ENCODE measurements at regions of chr15 and their contacts with region 1.

Region 1: DNA sequence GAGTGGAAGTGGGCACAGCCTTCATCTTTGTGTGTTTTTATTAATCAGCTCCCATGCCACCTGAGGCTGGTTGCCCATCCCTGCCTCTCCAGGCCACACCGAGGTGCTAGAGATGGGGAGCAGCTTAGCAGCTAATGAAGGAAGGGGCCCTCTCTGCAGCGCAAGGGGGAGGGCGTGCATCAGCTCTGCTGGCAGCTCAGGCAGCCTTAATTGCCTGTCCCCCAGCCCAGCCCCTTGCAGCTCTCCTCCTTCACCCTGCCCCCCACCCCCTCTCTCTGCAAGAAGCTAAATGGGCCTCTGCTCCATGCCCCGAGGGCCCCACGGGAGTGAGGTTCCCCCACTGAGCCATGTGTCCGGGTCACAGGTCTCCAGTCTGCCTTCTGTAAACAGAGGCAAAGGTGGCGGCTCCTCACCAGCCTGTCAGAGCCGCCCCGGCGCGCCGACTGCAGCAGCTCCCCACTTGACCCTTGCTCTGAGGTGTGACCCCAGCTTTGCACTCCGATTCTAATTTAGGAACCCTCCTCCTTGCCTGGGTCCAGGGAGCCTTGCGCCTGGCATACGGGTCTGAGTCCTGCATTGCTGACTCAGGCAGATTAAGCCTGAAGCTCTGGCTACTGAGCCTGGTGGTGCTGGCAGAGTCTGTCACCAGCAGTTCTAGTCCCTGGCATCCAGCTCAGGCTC is 27.9 kb upstream of the NTRK3 start:
- DNase-seq: no peak
- ATAC-seq: peak; percentile 42
- H3K4me3 Mint-ChIP-seq: no peak overlapping the region
- H3K27ac Mint-ChIP-seq: no peak overlapping the region
- H3K4me1 Mint-ChIP-seq: peaks cover 21% of the 10 kb centered on the region
- H3K27me3 Mint-ChIP-seq: peaks cover 15% of the 10 kb centered on the region; the same call in 1 of the 2 replicates
- CTCF ChIP-seq: no peak

Region 2: DNA sequence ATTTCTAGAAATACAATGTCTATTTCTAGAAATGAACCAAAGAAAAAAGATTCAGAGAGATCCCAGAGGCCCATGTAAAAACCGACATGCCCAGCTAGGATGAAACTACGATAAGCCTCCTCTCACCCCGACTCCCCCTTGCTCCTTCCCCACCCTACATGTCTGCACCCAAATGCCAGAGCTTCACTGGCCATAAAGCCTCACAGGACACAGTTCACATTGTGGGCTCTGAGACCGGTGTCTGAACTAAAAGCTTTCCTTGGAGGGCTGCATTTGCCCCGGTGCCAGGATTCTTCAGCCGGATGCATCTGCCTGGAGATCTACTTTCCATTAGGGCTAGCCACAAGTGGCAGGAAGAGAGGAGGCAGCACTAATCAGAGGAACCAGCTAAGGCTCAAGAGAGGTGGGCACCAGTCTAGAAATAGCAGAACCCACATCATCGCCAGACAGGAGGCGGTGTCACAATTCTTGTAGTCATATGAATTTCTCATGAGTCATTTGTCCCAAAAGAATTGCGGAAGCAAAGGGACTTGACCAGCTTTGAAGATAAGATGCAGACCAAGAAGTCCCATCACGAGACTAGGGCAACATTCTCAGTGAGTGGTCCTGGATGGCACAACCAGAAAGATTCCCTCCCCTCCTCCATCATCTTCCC is 381.6 kb before region 1 on chr15:
- CTCF ChIA-PET with region 1: no interaction called
- POLR2A ChIA-PET with region 1: no interaction called
- DNase-seq: no peak
- ATAC-seq: no peak
- H3K4me3 Mint-ChIP-seq: no peak overlapping the region
- H3K27ac Mint-ChIP-seq: no peak overlapping the region
- H3K4me1 Mint-ChIP-seq: no peaks in the 10 kb centered on the region
- H3K27me3 Mint-ChIP-seq: no peaks in the 10 kb centered on the region
- CTCF ChIP-seq: no peak

Region 3: GRCh38 chr15:88246666-88247446 is 37.6 kb before region 1 on chr15:
- CTCF ChIA-PET with region 1: interaction called, 10 read pairs
- POLR2A ChIA-PET with region 1: no interaction called
- DNase-seq: peak; percentile 84
- ATAC-seq: peak; percentile 89
- H3K4me3 Mint-ChIP-seq: peak overlapping the region; percentile 52
- H3K27ac Mint-ChIP-seq: no peak overlapping the region
- H3K4me1 Mint-ChIP-seq: peaks cover 17% of the 10 kb centered on the region
- H3K27me3 Mint-ChIP-seq: peaks cover 3% of the 10 kb centered on the region; the same call in 1 of the 2 replicates
- CTCF ChIP-seq: peak; percentile 94

Region 4: GRCh38 chr15:88303395-88303794 is 18.9 kb after region 1 on chr15:
- CTCF ChIA-PET with region 1: no interaction called
- POLR2A ChIA-PET with region 1: no interaction called
- DNase-seq: no peak
- ATAC-seq: no peak
- H3K4me3 Mint-ChIP-seq: no peak overlapping the region
- H3K27ac Mint-ChIP-seq: no peak overlapping the region
- H3K4me1 Mint-ChIP-seq: peaks cover 17% of the 10 kb centered on the region
- H3K27me3 Mint-ChIP-seq: peaks cover 6% of the 10 kb centered on the region; the same call in 1 of the 2 replicates
- CTCF ChIP-seq: no peak